CD4-positive, alpha-beta T cell (primary cell): ENCODE measurements at regions of chr19 and their contacts with region 1.

Region 1: DNA sequence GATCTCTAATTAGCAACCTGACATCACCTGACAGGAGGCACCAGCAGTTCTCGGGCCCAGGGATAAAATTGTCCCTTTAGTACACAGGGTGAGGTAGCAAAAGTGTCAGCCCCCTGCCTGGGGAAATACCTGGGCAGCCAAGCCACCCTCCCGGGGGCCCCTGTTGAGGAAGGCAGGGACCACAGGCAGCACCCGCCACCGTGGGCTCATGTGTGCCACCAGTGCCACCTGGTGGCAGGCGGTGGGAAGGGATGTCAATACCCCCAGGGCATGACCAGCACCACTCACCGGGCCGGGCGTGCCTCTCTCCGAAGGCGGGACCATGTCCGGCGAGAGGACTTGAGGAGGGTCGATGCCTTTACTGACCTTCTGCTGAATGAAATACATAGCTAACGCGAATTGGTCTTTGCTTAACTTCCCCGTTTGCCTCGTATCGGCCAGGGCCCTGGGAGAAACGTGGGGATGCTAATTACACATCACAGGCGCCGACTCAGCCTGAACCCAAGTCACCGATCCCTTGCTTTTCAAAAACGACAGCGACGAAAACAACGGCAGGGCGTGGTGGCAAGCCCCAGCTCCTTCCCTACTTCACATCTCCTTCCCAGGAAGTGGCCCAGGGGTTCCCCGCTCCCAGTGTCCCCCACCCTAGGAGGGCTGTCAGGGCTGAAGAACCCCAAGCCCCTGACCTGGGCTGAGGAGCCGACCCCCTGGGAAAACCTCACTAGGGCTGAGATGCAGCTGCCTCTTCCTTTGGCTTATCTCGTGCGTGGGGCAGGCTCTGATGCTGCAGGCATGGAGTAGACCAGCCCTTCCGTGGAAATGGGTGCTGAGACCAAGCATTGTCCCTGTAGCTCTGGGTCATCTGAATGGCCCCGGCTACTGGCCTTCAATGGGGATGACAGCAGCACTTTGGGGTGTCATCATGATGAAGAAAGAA is 53.8 kb downstream of the EPS15L1 start:
- DNase-seq: peak; percentile 57 to 86 (median 67)
- ATAC-seq: peak; percentile 96
- H3K4me3 ChIP-seq: no peak overlapping the region
- H3K4me3 Mint-ChIP-seq: no peak overlapping the region
- H3K27ac ChIP-seq: no peak overlapping the region
- H3K27ac Mint-ChIP-seq: peak overlapping the region; percentile 33
- H3K4me1 ChIP-seq: peaks cover 10% of the 10 kb centered on the region
- H3K4me1 Mint-ChIP-seq: peaks cover 12% of the 10 kb centered on the region
- H3K27me3 ChIP-seq: no peaks in the 10 kb centered on the region
- H3K27me3 Mint-ChIP-seq: no peaks in the 10 kb centered on the region
- CTCF ChIP-seq: peak; percentile 89

Region 2: DNA sequence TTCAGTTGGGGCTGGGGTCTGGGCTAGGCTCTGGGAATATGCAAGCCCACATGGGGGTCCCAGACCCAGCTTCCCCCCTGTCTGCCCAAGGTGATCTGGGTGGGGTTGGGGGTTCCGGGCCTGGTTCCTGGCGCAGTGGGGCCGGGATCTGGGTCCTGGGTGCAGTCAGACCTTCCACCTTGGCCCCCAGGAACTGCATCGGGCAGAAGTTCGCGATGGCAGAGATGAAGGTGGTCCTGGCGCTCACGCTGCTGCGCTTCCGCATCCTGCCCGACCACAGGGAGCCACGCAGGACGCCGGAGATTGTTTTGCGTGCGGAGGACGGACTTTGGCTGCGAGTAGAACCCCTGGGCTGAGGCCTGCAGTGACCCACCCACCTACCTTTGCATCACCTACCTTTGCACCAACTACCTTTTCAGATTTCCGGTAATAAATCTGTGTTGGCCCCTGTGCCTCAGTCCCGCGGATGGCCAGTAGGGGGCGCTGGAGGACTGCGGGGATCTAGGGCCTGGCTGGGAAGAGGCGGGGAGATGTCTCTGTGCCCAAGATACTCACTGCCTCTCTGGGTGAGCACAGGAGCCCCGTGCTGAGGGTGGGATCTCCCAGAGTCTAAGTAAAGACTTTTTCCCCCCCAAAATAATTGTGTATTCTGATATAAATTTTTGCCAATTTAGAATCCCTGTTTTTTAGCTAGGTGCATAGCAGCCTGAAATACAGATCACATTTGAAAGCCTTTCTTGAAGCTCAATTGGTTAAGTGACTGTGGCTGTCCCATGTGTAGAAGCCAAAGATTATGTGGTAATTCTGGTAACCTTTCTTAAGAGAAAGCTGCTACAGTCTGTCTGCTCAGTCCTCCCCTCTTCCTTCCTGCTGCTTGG is 788.7 kb before region 1 on chr19:
- CTCF ChIA-PET with region 1: no interaction called
- POLR2A ChIA-PET with region 1: no interaction called
- intact Hi-C with region 1: loop called (anchors 1 to 5 kb)
- DNase-seq: peak; percentile 77 to 95 (median 90)
- ATAC-seq: peak; percentile 98
- H3K4me3 ChIP-seq: no peak overlapping the region
- H3K4me3 Mint-ChIP-seq: no peak overlapping the region
- H3K27ac ChIP-seq: no peak overlapping the region
- H3K27ac Mint-ChIP-seq: no peak overlapping the region
- H3K4me1 ChIP-seq: peaks cover 10% of the 10 kb centered on the region
- H3K4me1 Mint-ChIP-seq: no peaks in the 10 kb centered on the region
- H3K27me3 ChIP-seq: peaks cover 0 to 7% of the 10 kb centered on the region in 2 experiments
- H3K27me3 Mint-ChIP-seq: peaks cover 22% of the 10 kb centered on the region
- CTCF ChIP-seq: peak; percentile 93

Region 3: DNA sequence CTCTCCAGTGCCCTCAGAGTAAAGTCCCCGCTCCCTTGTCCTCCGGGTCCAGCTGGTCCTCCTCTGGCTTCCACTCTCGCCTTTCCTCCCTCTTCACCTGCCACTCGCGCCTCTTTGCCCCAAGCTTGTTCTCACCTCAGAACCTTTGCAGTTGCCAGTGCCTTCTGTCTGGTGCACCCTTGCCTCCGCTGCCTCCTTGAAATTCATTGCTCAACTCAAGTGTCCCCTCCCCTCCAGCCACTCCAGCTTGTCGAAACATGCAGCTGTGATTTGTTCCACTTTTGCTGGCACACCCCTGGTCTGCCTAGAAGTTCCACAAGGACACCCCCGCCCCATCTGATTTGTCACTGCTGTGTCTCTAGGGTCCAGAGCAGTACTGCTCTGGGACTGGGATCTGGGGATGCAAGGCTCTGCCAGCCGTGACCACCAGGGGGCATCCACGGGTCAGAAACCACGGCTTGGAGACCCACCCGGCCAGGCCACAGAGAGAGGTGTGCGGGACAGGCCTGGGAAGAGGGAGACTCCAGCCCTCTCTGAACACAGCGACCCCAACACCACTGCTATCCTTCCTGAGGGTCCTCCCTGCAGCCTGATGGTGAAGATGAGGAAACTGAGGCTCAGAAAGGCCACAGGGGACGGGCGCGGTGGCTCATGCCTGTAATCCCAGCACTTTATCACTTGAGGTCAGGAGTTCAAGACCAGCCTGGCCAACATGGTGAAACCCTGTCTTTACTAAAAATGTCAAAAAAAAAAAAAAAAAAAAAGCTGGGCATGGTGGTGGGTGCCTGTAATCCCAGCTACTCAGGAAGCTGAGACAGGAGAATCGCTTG is 170.4 kb before region 1 on chr19:
- CTCF ChIA-PET with region 1: interaction called, 3 read pairs
- POLR2A ChIA-PET with region 1: interaction called, 3 read pairs
- intact Hi-C with region 1: loop called (anchors 1 kb)
- DNase-seq: peak; percentile 64 to 93 (median 83)
- ATAC-seq: peak; percentile 84
- H3K4me3 ChIP-seq: no peak overlapping the region
- H3K4me3 Mint-ChIP-seq: no peak overlapping the region
- H3K27ac ChIP-seq: no peak overlapping the region
- H3K27ac Mint-ChIP-seq: peak overlapping the region; percentile 31
- H3K4me1 ChIP-seq: peaks cover 17% of the 10 kb centered on the region
- H3K4me1 Mint-ChIP-seq: peaks cover 38% of the 10 kb centered on the region
- H3K27me3 ChIP-seq: no peaks in the 10 kb centered on the region
- H3K27me3 Mint-ChIP-seq: no peaks in the 10 kb centered on the region
- CTCF ChIP-seq: peak; percentile 80